ENCODE measurements at regions of chr11 and their contacts with region 1.

Region 1: GRCh38 chr11:59142530-59143507 is at the start of gene FAM111A:
- DNase-seq: peak; percentile 89 to 94 (median 90)
- H3K4me3 ChIP-seq: peak within 1 kb of the TSS; percentile 86 to 92
- H3K4me3 Mint-ChIP-seq: peak within 1 kb of the TSS; percentile 94 to 98 (median 97)
- H3K27ac ChIP-seq: peak within 1 kb of the TSS; percentile 87
- H3K27ac Mint-ChIP-seq: peak within 1 kb of the TSS; percentile 96 to 99 (median 98)
- H3K4me1 ChIP-seq: peaks cover 46% of the 10 kb centered on the region
- H3K4me1 Mint-ChIP-seq: peaks cover 39 to 60% (median 43%) of the 10 kb centered on the region in 4 donors
- H3K27me3 ChIP-seq: no peaks in the 10 kb centered on the region
- H3K27me3 Mint-ChIP-seq: no peaks in the 10 kb centered on the region
- total RNA-seq, gene FAM111A: 128 to 130 TPM

Region 2: GRCh38 chr11:57324886-57325734 is 1817.7 kb before region 1 on chr11 and contains the start of gene TNKS1BP1:
- CTCF ChIA-PET with region 1: no interaction called
- POLR2A ChIA-PET with region 1: no interaction called
- intact Hi-C with region 1: loop called (anchors 5 kb)
- DNase-seq: peak; percentile 90 to 92 (median 91)
- H3K4me3 ChIP-seq: peak within 1 kb of the TSS; percentile 59 to 64
- H3K4me3 Mint-ChIP-seq: peak within 1 kb of the TSS; percentile 88 to 99 (median 94)
- H3K27ac ChIP-seq: peak within 1 kb of the TSS; percentile 59
- H3K27ac Mint-ChIP-seq: peak within 1 kb of the TSS; percentile 95 to 99 (median 97)
- H3K4me1 ChIP-seq: peaks cover 33% of the 10 kb centered on the region
- H3K4me1 Mint-ChIP-seq: peaks cover 28 to 62% (median 37%) of the 10 kb centered on the region in 4 donors
- H3K27me3 ChIP-seq: no peaks in the 10 kb centered on the region
- H3K27me3 Mint-ChIP-seq: no peaks in the 10 kb centered on the region
- total RNA-seq, gene TNKS1BP1: 17.2 to 23.7 TPM

Region 3: DNA sequence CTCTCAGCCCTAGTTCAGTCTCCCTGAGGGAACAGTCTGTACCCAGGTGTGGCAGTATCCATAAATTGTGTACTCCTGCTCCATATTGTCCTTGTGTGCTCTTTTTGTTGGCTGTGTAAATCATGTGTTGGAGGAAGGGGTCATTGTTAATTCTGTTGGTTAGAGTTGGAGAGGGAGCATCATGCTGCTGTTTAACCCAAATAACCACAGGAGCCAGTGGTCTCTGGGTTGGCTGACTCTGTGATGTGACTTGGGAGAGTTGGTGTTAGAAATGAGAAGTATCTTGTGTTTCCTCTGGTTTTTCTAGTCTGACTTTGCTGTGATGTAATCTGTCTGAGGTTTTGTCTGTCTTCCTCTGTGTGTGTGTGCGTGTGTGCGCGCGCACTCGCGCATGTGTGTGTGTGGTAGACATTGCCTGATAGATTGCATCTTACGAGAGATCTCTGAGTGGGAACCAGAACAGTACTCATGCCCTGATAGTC is 1350.7 kb before region 1 on chr11:
- CTCF ChIA-PET with region 1: no interaction called
- POLR2A ChIA-PET with region 1: no interaction called
- intact Hi-C with region 1: loop called (anchors 5 kb)
- DNase-seq: peak; percentile 84 to 93 (median 88)
- H3K4me3 ChIP-seq: peak overlapping the region in 1 of 2 donors; percentile 23
- H3K4me3 Mint-ChIP-seq: peak overlapping the region; percentile 58 to 87 (median 76)
- H3K27ac ChIP-seq: peak overlapping the region; percentile 61
- H3K27ac Mint-ChIP-seq: peak overlapping the region; percentile 84 to 99 (median 97)
- H3K4me1 ChIP-seq: peaks cover 35% of the 10 kb centered on the region
- H3K4me1 Mint-ChIP-seq: peaks cover 26 to 39% (median 32%) of the 10 kb centered on the region in 4 donors
- H3K27me3 ChIP-seq: no peaks in the 10 kb centered on the region
- H3K27me3 Mint-ChIP-seq: no peaks in the 10 kb centered on the region

Region 4: GRCh38 chr11:59158206-59159068 is 15.6 kb after region 1 on chr11:
- CTCF ChIA-PET with region 1: interaction called, 57 read pairs
- POLR2A ChIA-PET with region 1: interaction called, 12 read pairs
- intact Hi-C with region 1: loop called (anchors 1 kb)
- DNase-seq: peak; percentile 65 to 73 (median 68)
- H3K4me3 ChIP-seq: no peak overlapping the region
- H3K4me3 Mint-ChIP-seq: no peak overlapping the region
- H3K27ac ChIP-seq: no peak overlapping the region
- H3K27ac Mint-ChIP-seq: peak overlapping the region in 3 of 7 donors; percentile 36 to 90 (median 66)
- H3K4me1 ChIP-seq: peaks cover 3% of the 10 kb centered on the region
- H3K4me1 Mint-ChIP-seq: peaks cover 2 to 8% (median 5%) of the 10 kb centered on the region in 4 donors
- H3K27me3 ChIP-seq: no peaks in the 10 kb centered on the region
- H3K27me3 Mint-ChIP-seq: peaks cover 10 to 14% of the 10 kb centered on the region in 2 donors

Region 5: GRCh38 chr11:59550368-59550841 is 407.6 kb after region 1 on chr11:
- CTCF ChIA-PET with region 1: no interaction called
- POLR2A ChIA-PET with region 1: interaction called, 3 read pairs
- intact Hi-C with region 1: loop called (anchors 5 kb)
- DNase-seq: peak; percentile 86 to 94 (median 87)
- H3K4me3 ChIP-seq: peak overlapping the region; percentile 19 to 61
- H3K4me3 Mint-ChIP-seq: peak overlapping the region; percentile 86 to 96 (median 88)
- H3K27ac ChIP-seq: peak overlapping the region; percentile 51
- H3K27ac Mint-ChIP-seq: peak overlapping the region; percentile 92 to 100 (median 94)
- H3K4me1 ChIP-seq: peaks cover 14% of the 10 kb centered on the region
- H3K4me1 Mint-ChIP-seq: peaks cover 16 to 52% (median 26%) of the 10 kb centered on the region in 4 donors
- H3K27me3 ChIP-seq: no peaks in the 10 kb centered on the region
- H3K27me3 Mint-ChIP-seq: peaks cover 0 to 9% of the 10 kb centered on the region in 2 donors

Region 6: DNA sequence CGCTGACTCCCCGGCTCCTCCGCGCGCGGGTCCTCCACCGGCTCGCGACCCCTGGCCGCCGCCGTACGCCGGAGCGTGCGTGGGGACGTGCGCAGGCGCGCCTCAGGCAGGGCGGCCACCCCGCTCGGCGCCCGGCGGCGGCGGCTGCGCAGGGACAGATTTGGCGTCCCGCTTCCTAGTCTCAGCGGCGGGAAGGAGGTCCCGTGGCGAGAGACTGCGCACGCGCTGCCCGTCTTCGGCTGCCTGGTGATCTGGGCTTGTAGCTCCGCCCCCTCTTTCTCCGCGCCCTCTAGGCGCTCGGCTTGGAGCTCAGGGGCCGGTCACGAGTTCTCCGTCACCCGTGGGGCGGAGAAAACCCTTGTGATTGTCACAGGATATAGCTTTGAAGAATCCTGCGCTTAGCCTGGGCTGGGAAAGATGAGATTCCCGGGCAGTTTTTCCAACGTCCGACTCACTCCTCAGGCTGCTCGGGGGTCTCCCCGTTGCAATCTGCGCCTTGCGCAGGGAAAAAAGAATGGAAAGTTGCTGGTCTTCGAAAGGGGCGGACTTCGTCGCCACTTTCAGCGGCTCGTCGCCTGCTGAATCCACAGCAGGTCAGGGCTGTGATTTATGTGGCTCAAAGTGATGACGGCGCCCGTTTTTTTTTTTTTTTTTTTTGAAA is 526.3 kb after region 1 on chr11 and contains the start of gene PATL1:
- CTCF ChIA-PET with region 1: interaction called, 3 read pairs
- POLR2A ChIA-PET with region 1: no interaction called
- intact Hi-C with region 1: loop called (anchors 2 kb)
- DNase-seq: peak; percentile 98 to 100 (median 99)
- H3K4me3 ChIP-seq: peak within 1 kb of the TSS; percentile 83 to 92
- H3K4me3 Mint-ChIP-seq: peak within 1 kb of the TSS; percentile 92 to 99 (median 96)
- H3K27ac ChIP-seq: peak within 1 kb of the TSS; percentile 99
- H3K27ac Mint-ChIP-seq: peak within 1 kb of the TSS; percentile 97 to 100 (median 100)
- H3K4me1 ChIP-seq: peaks cover 36% of the 10 kb centered on the region
- H3K4me1 Mint-ChIP-seq: peaks cover 29 to 50% (median 38%) of the 10 kb centered on the region in 4 donors
- H3K27me3 ChIP-seq: no peaks in the 10 kb centered on the region
- H3K27me3 Mint-ChIP-seq: no peaks in the 10 kb centered on the region
- total RNA-seq, gene PATL1: 45.3 to 45.5 TPM